T-cell (primary cell): ENCODE measurements at regions of chr18 and their contacts with region 1.

Region 1: DNA sequence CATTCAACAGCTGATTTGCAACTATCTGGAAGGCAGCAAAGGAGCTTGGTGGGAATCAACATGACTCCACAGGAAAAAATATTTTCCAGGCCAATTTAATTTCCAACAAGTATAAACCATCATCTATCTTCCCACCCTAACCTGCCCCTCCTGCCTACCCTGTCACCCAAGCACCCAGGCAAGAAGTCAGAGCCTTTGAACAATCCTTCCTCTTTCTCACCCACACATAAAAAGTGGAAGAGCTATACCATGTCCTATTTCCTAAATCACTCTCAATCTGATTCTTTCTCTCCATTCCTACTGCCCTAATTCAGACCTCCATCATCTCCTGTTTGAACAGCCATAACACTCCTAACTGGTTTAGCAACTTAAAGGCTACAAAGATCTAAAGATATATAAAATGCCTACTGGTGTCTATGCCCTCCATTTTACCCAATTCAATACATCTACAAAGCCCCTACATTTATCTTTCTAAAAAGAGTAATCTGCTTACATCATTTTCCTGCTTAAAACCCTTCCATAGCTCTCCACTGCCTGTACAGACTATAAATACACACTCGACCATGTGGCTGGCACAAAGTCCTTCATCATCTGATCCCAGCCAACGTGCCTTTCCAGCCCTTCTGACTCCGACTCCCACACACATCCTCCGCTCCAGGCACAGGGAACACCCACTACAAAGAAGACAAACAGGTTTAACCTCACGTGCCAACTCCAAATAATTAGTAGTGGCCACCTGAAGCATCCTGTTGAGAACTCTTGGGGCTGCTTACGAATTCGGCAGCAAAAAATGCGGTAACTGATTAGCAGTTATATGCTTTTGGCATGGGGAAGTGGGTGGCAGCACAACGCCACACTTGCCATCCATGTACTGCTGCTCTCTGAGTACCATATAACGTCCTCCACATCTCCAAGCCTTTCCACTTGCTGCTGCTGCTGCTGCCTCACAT is 12.4 kb downstream of the SPIRE1 start:
- DNase-seq: no peak
- ATAC-seq: no peak
- H3K4me3 ChIP-seq: no peak overlapping the region
- H3K4me3 Mint-ChIP-seq: no peak overlapping the region
- H3K27ac ChIP-seq: no peak overlapping the region
- H3K27ac Mint-ChIP-seq: no peak overlapping the region
- H3K4me1 ChIP-seq: no peaks in the 10 kb centered on the region
- H3K4me1 Mint-ChIP-seq: no peaks in the 10 kb centered on the region
- H3K27me3 ChIP-seq: peaks cover 0 to 6% of the 10 kb centered on the region in 2 experiments
- H3K27me3 Mint-ChIP-seq: peaks cover 23% of the 10 kb centered on the region in 2 donors

Region 2: DNA sequence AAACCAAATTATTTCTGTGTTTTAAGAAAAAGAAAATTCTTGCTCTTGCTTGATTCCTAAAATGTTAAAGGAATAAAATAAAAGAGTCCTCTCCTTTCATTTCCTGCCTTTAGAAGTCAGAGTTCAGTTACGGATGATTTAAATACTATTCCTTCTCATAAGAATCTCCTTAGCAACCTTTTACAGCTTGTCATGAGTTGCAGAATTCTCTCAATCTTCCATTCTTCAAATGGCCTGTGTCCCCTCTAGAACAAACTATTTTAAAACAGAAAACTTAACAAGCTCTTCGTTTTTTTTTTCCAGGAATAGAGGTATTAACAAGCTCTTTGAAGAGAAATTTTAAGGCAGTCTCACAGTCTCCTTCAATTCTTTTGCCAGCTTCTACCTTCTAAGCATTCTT is 29.8 kb before region 1 on chr18:
- CTCF ChIA-PET with region 1: no interaction called
- POLR2A ChIA-PET with region 1: no interaction called
- DNase-seq: no peak
- ATAC-seq: no peak
- H3K4me3 ChIP-seq: no peak overlapping the region
- H3K4me3 Mint-ChIP-seq: no peak overlapping the region
- H3K27ac ChIP-seq: no peak overlapping the region
- H3K27ac Mint-ChIP-seq: no peak overlapping the region
- H3K4me1 ChIP-seq: no peaks in the 10 kb centered on the region
- H3K4me1 Mint-ChIP-seq: no peaks in the 10 kb centered on the region
- H3K27me3 ChIP-seq: peaks cover 0 to 3% of the 10 kb centered on the region in 2 experiments
- H3K27me3 Mint-ChIP-seq: peaks cover 4 to 5% of the 10 kb centered on the region in 2 donors

Region 3: GRCh38 chr18:12702221-12703095 is 56.9 kb after region 1 on chr18 and contains the starts of genes CEP76 and PSMG2:
- CTCF ChIA-PET with region 1: no interaction called
- POLR2A ChIA-PET with region 1: no interaction called
- DNase-seq: peak; percentile 66 to 89 (median 80)
- ATAC-seq: peak; percentile 85 to 87 (median 85)
- H3K4me3 ChIP-seq: peak within 1 kb of the TSS; percentile 69 to 96
- H3K4me3 Mint-ChIP-seq: peak within 1 kb of the TSS; percentile 85 to 97 (median 93)
- H3K27ac ChIP-seq: peak within 1 kb of the TSS; percentile 94
- H3K27ac Mint-ChIP-seq: peak within 1 kb of the TSS; percentile 96 to 100
- H3K4me1 ChIP-seq: peaks cover 22 to 24% of the 10 kb centered on the region in 2 experiments
- H3K4me1 Mint-ChIP-seq: peaks cover 51 to 57% (median 52%) of the 10 kb centered on the region in 3 donors
- H3K27me3 ChIP-seq: no peaks in the 10 kb centered on the region
- H3K27me3 Mint-ChIP-seq: no peaks in the 10 kb centered on the region
- total RNA-seq, gene CEP76: 6.8 to 9.7 (median 8.2) TPM
- total RNA-seq, gene PSMG2: 50.3 to 59.9 (median 56.1) TPM

Region 4: GRCh38 chr18:12867441-12868123 is 222.1 kb after region 1 on chr18:
- CTCF ChIA-PET with region 1: no interaction called
- POLR2A ChIA-PET with region 1: interaction called in 1 of 2 experiments, 12 read pairs
- DNase-seq: no peak
- ATAC-seq: no peak
- H3K4me3 ChIP-seq: no peak overlapping the region
- H3K4me3 Mint-ChIP-seq: no peak overlapping the region
- H3K27ac ChIP-seq: no peak overlapping the region
- H3K27ac Mint-ChIP-seq: no peak overlapping the region
- H3K4me1 ChIP-seq: peaks cover 3 to 9% of the 10 kb centered on the region in 2 experiments
- H3K4me1 Mint-ChIP-seq: peaks cover 37 to 49% (median 44%) of the 10 kb centered on the region in 3 donors
- H3K27me3 ChIP-seq: no peaks in the 10 kb centered on the region
- H3K27me3 Mint-ChIP-seq: no peaks in the 10 kb centered on the region

Region 5: DNA sequence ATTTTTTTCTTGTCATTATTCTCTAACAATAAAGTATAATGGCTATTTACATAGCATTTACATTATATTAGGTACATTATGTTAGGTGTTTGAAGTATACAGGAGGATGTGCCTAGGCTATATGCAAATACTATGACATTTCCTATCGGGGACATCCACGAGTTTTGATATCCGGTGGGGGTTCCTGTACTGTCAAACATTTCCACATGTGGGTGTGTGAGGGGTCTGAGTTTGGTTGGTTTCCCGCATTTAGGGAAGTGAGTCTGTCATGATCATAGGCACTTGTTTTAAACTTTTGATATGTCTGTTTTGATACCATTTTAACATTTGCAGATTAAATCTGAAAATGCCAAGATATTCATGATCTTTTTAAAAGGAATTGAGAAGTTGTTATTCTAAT is 421.6 kb after region 1 on chr18:
- CTCF ChIA-PET with region 1: interaction called in 1 of 2 experiments, 10 read pairs
- POLR2A ChIA-PET with region 1: no interaction called
- DNase-seq: peak in 1 of 35 experiments; percentile 6
- ATAC-seq: no peak
- H3K4me3 ChIP-seq: no peak overlapping the region
- H3K4me3 Mint-ChIP-seq: no peak overlapping the region
- H3K27ac ChIP-seq: no peak overlapping the region
- H3K27ac Mint-ChIP-seq: peak overlapping the region in 1 of 2 donors; percentile 44
- H3K4me1 ChIP-seq: peaks cover 0 to 3% of the 10 kb centered on the region in 2 experiments
- H3K4me1 Mint-ChIP-seq: peaks cover 14 to 25% (median 16%) of the 10 kb centered on the region in 3 donors
- H3K27me3 ChIP-seq: no peaks in the 10 kb centered on the region
- H3K27me3 Mint-ChIP-seq: no peaks in the 10 kb centered on the region

Region 6: DNA sequence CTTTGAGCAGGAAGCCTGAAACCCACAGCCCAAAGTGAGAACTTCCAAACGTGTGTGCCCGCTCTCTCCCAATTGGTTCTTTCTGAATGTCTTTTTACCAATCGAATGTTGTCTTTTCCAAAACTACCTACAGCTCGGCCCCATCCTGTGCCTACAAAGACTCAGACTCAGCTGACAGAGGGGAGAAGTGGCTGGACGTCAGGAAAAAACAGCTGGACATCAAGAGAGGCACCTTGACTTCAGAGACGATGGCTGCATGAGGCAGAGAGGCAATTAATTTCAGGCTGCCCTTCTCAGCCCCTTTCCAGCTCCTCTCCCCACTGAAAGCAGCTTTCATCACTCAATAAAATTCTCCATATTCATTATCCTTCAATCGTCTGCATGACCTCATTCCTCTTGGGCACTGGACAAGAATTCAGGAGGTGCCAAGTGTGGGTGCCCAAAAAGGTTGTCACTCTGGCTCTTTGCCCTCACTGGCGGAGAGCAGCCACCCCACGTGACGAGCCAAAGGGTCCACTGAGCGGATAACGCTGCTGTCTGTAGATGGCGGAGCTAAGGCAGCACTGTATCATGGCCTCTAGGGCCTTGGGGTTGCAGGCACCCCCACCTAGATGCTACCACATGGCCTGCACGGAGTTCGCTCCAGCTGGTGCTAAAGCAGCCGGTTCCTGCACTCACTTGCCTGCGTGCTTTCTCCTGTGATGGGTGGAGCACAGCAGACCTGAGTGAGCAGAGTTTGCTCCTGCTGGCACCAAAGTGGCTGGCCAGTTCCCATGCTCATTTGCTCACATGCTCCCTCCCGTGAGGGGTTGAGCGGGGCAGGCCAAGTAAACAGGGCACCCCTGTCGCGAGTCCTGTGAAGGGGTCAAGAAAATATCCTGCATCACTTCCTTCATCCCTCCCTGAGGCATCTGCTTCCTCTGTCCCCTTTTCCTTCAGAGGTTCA is 1042.9 kb after region 1 on chr18:
- CTCF ChIA-PET with region 1: no interaction called
- POLR2A ChIA-PET with region 1: no interaction called
- DNase-seq: no peak
- ATAC-seq: no peak
- H3K4me3 ChIP-seq: no peak overlapping the region
- H3K4me3 Mint-ChIP-seq: no peak overlapping the region
- H3K27ac ChIP-seq: no peak overlapping the region
- H3K27ac Mint-ChIP-seq: no peak overlapping the region
- H3K4me1 ChIP-seq: no peaks in the 10 kb centered on the region
- H3K4me1 Mint-ChIP-seq: peaks cover 35 to 54% (median 36%) of the 10 kb centered on the region in 3 donors
- H3K27me3 ChIP-seq: no peaks in the 10 kb centered on the region
- H3K27me3 Mint-ChIP-seq: no peaks in the 10 kb centered on the region